Heart right ventricle (tissue), 16 donors: ENCODE measurements at regions of chr7 and their contacts with region 1.

Region 1: GRCh38 chr7:36152756-36153570 is at the start of gene EEPD1:
- DNase-seq: peak; percentile 100
- ATAC-seq: peak; percentile 96 to 98 (median 97)
- H3K4me3 ChIP-seq: peak within 1 kb of the TSS; percentile 62 to 95 (median 92)
- H3K27ac ChIP-seq: peak within 1 kb of the TSS; percentile 62 to 94 (median 89)
- H3K4me1 ChIP-seq: peaks cover 8 to 54% (median 50%) of the 10 kb centered on the region in 9 donors
- H3K27me3 ChIP-seq: no peaks in the 10 kb centered on the region
- CTCF ChIP-seq: no peak
- total RNA-seq, gene EEPD1: 6.1 to 14.7 (median 8.4) TPM

Region 2: DNA sequence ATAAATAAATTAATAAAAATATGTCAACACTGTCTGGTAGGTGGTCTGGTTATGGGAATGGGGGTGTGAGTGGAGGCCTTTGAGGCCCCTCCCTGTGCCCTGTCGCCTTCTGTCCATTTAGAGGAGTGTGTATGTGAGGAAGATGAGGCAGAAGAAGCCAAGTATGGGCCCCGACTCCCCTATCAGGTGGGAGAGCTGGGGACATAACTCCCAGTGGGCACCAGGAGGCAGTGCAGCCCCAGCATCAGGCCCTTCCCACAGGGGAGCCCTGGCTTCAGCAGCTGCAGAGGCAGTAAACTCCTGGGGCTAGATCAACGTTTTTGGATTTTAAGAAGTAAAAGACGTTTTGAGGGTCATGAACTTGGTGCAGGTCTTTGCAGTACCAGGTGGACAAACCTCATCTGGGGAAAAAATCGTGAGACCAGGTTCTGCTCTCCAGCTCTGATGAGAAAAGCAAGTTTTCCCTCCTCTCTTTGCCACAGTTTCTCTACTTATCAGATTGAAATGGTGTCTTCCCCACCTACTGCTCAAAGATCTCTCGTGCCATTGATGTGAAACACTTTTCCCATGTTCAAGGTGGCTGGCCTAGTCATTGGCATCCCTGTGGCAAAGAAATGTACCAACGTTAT is 167.7 kb before region 1 on chr7:
- intact Hi-C with region 1: loop called in 3 of 10 experiments (anchors 5 to 10 kb)
- DNase-seq: peak; percentile 79 to 85
- ATAC-seq: peak; percentile 91 to 98 (median 96)
- H3K4me3 ChIP-seq: no peak overlapping the region
- H3K27ac ChIP-seq: no peak overlapping the region
- H3K4me1 ChIP-seq: peaks cover 0 to 8% (median 0%) of the 10 kb centered on the region in 9 donors
- H3K27me3 ChIP-seq: no peaks in the 10 kb centered on the region
- CTCF ChIP-seq: peak; percentile 78 to 95 (median 92)

Region 3: GRCh38 chr7:36037121-36037662 is 115.8 kb before region 1 on chr7:
- intact Hi-C with region 1: loop called in 2 of 10 experiments (anchors 5 kb)
- DNase-seq: peak; percentile 52 to 82
- ATAC-seq: peak; percentile 62 to 93 (median 85)
- H3K4me3 ChIP-seq: peak overlapping the region in 1 of 10 donors; percentile 1
- H3K27ac ChIP-seq: peak overlapping the region; percentile 48 to 91 (median 83)
- H3K4me1 ChIP-seq: peaks cover 6 to 65% (median 44%) of the 10 kb centered on the region in 9 donors
- H3K27me3 ChIP-seq: no peaks in the 10 kb centered on the region
- CTCF ChIP-seq: peak in 2 of 9 donors; percentile 12

Region 4: GRCh38 chr7:36071605-36072004 is 81.4 kb before region 1 on chr7:
- intact Hi-C with region 1: no loop called
- DNase-seq: no peak
- ATAC-seq: no peak
- H3K4me3 ChIP-seq: no peak overlapping the region
- H3K27ac ChIP-seq: no peak overlapping the region
- H3K4me1 ChIP-seq: peaks cover 0 to 23% (median 10%) of the 10 kb centered on the region in 9 donors
- H3K27me3 ChIP-seq: peaks cover 0 to 3% (median 0%) of the 10 kb centered on the region in 7 donors
- CTCF ChIP-seq: no peak

Region 5: GRCh38 chr7:36084475-36085097 is 68.4 kb before region 1 on chr7:
- intact Hi-C with region 1: loop called in 1 of 10 experiments (anchors 10 kb)
- DNase-seq: peak; percentile 32 to 35
- ATAC-seq: peak in 7 of 8 donors; percentile 42 to 88 (median 67)
- H3K4me3 ChIP-seq: no peak overlapping the region
- H3K27ac ChIP-seq: no peak overlapping the region
- H3K4me1 ChIP-seq: peaks cover 0 to 23% (median 10%) of the 10 kb centered on the region in 9 donors
- H3K27me3 ChIP-seq: no peaks in the 10 kb centered on the region
- CTCF ChIP-seq: peak in 8 of 9 donors; percentile 17 to 47 (median 30)

Region 6: GRCh38 chr7:36115448-36116321 is 37.3 kb before region 1 on chr7:
- intact Hi-C with region 1: loop called in 2 of 10 experiments (anchors 5 kb)
- DNase-seq: peak; percentile 36 to 68
- ATAC-seq: peak; percentile 27 to 85 (median 62)
- H3K4me3 ChIP-seq: no peak overlapping the region
- H3K27ac ChIP-seq: peak overlapping the region in 6 of 10 donors; percentile 3 to 61 (median 44)
- H3K4me1 ChIP-seq: peaks cover 6 to 57% (median 34%) of the 10 kb centered on the region in 9 donors
- H3K27me3 ChIP-seq: no peaks in the 10 kb centered on the region
- CTCF ChIP-seq: no peak

Region 7: GRCh38 chr7:36128448-36129047 is 24.4 kb before region 1 on chr7:
- intact Hi-C with region 1: loop called in 2 of 10 experiments (anchors 1 to 2 kb)
- DNase-seq: peak; percentile 75
- ATAC-seq: peak; percentile 86 to 96 (median 89)
- H3K4me3 ChIP-seq: peak overlapping the region in 5 of 10 donors; percentile 2 to 15 (median 8)
- H3K27ac ChIP-seq: peak overlapping the region; percentile 61 to 85 (median 72)
- H3K4me1 ChIP-seq: peaks cover 10 to 49% (median 25%) of the 10 kb centered on the region in 9 donors
- H3K27me3 ChIP-seq: no peaks in the 10 kb centered on the region
- CTCF ChIP-seq: peak; percentile 52 to 80 (median 69)

Region 8: GRCh38 chr7:36280840-36281812 is 128.2 kb after region 1 on chr7:
- intact Hi-C with region 1: loop called in 9 of 10 experiments (anchors 2 to 10 kb)
- DNase-seq: peak; percentile 61 to 68
- ATAC-seq: peak; percentile 69 to 92 (median 80)
- H3K4me3 ChIP-seq: peak overlapping the region in 3 of 10 donors; percentile 12 to 28 (median 17)
- H3K27ac ChIP-seq: peak overlapping the region in 8 of 10 donors; percentile 22 to 90 (median 62)
- H3K4me1 ChIP-seq: peaks cover 2 to 96% (median 74%) of the 10 kb centered on the region in 9 donors
- H3K27me3 ChIP-seq: no peaks in the 10 kb centered on the region
- CTCF ChIP-seq: peak in 2 of 9 donors; percentile 5 to 13